Heart right ventricle (tissue), 16 donors: ENCODE measurements at regions of chr2 and their contacts with region 1.

Region 1: GRCh38 chr2:198127627-198128026 is 323.2 kb downstream of the PLCL1 start:
- DNase-seq: peak; percentile 22 to 23
- ATAC-seq: peak in 7 of 8 donors; percentile 55 to 86 (median 79)
- H3K4me3 ChIP-seq: no peak overlapping the region
- H3K27ac ChIP-seq: no peak overlapping the region
- H3K4me1 ChIP-seq: peaks cover 0 to 35% (median 5%) of the 10 kb centered on the region in 9 donors
- H3K27me3 ChIP-seq: no peaks in the 10 kb centered on the region
- CTCF ChIP-seq: peak; percentile 37 to 78 (median 73)

Region 2: GRCh38 chr2:197799068-197799467 is 328.6 kb before region 1 on chr2:
- intact Hi-C with region 1: loop called in 9 of 10 experiments (anchors 1 to 5 kb)
- DNase-seq: no peak
- ATAC-seq: no peak
- H3K4me3 ChIP-seq: no peak overlapping the region
- H3K27ac ChIP-seq: no peak overlapping the region
- H3K4me1 ChIP-seq: peaks cover 0 to 42% (median 21%) of the 10 kb centered on the region in 9 donors
- H3K27me3 ChIP-seq: peaks cover 0 to 30% (median 0%) of the 10 kb centered on the region in 7 donors
- CTCF ChIP-seq: no peak

Region 3: DNA sequence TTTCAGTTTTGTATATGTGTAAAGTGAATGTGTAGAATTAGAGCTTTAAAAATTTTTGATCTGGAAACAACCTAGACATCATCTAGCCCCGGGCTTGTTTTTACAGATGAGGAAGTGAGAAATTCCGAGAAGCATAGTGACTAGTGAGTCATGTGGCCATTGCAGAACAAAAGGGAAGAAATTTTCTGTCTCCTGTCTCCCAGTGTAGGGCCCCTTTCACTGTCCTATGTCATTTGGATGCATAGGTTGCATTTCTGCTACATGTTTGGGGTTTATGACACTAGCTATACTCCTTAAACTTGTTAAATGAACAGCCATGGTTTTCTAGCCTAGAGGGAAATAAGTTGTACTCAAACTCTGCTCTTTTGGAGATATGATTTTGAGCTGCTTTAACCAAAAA is 238.6 kb before region 1 on chr2:
- intact Hi-C with region 1: loop called in 1 of 10 experiments (anchors 10 kb)
- DNase-seq: no peak
- ATAC-seq: peak in 2 of 8 donors; percentile 52 to 67
- H3K4me3 ChIP-seq: no peak overlapping the region
- H3K27ac ChIP-seq: peak overlapping the region in 7 of 10 donors; percentile 3 to 60 (median 29)
- H3K4me1 ChIP-seq: peaks cover 0 to 62% (median 31%) of the 10 kb centered on the region in 9 donors
- H3K27me3 ChIP-seq: no peaks in the 10 kb centered on the region
- CTCF ChIP-seq: no peak

Region 4: DNA sequence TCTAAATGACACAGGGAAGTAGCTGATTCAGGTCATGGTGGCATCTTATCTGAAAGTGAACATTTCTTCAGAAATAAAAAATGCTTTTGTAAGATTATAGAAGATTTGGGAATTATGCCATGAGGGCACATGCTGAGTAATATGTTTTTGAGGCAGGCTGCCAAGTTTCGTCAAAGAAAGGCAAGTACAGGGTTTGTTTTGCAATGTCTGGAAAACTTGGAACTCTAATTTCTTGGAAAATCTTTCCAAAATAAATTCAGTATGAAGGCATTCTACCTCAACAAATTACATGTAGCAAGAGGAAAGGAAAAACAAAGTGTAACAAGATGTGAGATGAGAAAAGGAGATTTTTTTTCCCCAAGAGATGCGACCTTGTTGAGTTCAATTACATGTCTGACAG is 155.6 kb before region 1 on chr2:
- intact Hi-C with region 1: loop called in 2 of 10 experiments (anchors 10 kb)
- DNase-seq: peak in 1 of 2 donors; percentile 30
- ATAC-seq: peak in 4 of 8 donors; percentile 18 to 46 (median 27)
- H3K4me3 ChIP-seq: no peak overlapping the region
- H3K27ac ChIP-seq: no peak overlapping the region
- H3K4me1 ChIP-seq: peaks cover 0 to 70% (median 21%) of the 10 kb centered on the region in 9 donors
- H3K27me3 ChIP-seq: no peaks in the 10 kb centered on the region
- CTCF ChIP-seq: no peak

Region 5: DNA sequence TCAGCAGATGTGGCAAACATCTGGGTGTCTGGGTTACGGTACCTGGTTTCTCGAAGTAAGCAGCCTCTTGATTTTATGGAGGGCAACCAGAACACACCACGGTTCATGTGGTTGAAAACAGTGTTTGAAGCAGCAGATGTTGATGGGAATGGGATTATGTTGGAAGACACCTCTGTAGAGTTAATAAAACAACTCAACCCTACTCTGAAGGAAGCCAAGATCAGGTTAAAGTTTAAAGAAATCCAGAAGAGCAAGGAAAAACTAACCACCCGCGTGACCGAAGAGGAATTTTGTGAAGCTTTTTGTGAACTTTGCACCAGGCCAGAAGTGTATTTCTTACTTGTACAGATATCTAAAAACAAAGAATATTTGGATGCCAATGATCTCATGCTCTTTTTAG is 43.5 kb before region 1 on chr2:
- intact Hi-C with region 1: loop called in 1 of 10 experiments (anchors 2 kb)
- DNase-seq: no peak
- ATAC-seq: no peak
- H3K4me3 ChIP-seq: no peak overlapping the region
- H3K27ac ChIP-seq: no peak overlapping the region
- H3K4me1 ChIP-seq: peaks cover 0 to 12% (median 0%) of the 10 kb centered on the region in 9 donors
- H3K27me3 ChIP-seq: no peaks in the 10 kb centered on the region
- CTCF ChIP-seq: no peak